Aorta (tissue), 5 donors: ENCODE measurements at regions of chr3 and their contacts with region 1.

Region 1: GRCh38 chr3:142993958-142994442 is 7.4 kb upstream of the U2SURP start:
- DNase-seq: peak; percentile 67 to 80
- ATAC-seq: peak; percentile 59
- H3K4me3 ChIP-seq: no peak overlapping the region
- H3K27ac ChIP-seq: no peak overlapping the region
- H3K4me1 ChIP-seq: no peaks in the 10 kb centered on the region
- H3K27me3 ChIP-seq: no peaks in the 10 kb centered on the region

Region 2: DNA sequence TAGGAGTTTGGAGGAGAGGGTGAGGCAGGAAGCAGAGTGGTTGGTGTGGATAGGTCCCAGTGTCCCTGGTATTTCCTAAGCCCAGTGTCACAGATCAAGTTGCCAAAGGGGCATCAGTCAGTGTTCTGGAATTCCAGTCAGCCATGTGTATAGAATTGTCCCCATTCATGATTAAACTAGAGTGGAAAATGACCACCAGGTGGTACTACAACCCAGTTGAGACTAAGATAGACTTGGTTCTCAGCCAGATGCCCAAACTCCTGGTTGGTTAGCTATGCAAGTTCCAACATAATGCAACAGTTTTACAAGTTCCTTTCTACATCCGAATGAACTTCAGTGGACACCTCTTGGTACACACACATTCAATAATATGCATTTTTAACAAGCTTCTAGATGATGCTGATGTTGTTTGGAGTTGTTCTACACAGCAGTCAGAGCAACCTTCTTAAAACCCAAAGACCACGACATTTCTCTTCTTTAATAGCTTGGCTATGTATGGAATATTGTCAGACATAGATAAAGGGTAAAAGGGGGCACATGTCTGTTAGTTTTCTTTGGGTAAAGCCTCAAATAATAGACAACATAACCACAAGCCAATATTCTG is 407.1 kb before region 1 on chr3:
- intact Hi-C with region 1: loop called (anchors 2 to 5 kb)
- DNase-seq: no peak
- ATAC-seq: peak; percentile 66
- H3K4me3 ChIP-seq: no peak overlapping the region
- H3K27ac ChIP-seq: no peak overlapping the region
- H3K4me1 ChIP-seq: no peaks in the 10 kb centered on the region
- H3K27me3 ChIP-seq: no peaks in the 10 kb centered on the region

Region 3: GRCh38 chr3:142595951-142596725 is 397.9 kb before region 1 on chr3 and contains the start of gene PLS1:
- intact Hi-C with region 1: loop called in 1 of 2 experiments (anchors 2 kb)
- DNase-seq: peak; percentile 86 to 93
- ATAC-seq: peak; percentile 94
- H3K4me3 ChIP-seq: peak within 1 kb of the TSS; percentile 15 to 56
- H3K27ac ChIP-seq: peak within 1 kb of the TSS in 1 of 2 donors; percentile 40
- H3K4me1 ChIP-seq: no peaks in the 10 kb centered on the region
- H3K27me3 ChIP-seq: no peaks in the 10 kb centered on the region
- total RNA-seq, gene PLS1: 0.97 to 1.0 TPM

Region 4: GRCh38 chr3:142723968-142724681 is 269.9 kb before region 1 on chr3 and contains the start of gene TRPC1:
- intact Hi-C with region 1: loop called in 1 of 2 experiments (anchors 10 kb)
- DNase-seq: peak; percentile 80 to 89
- ATAC-seq: peak; percentile 93
- H3K4me3 ChIP-seq: peak within 1 kb of the TSS; percentile 91 to 95
- H3K27ac ChIP-seq: peak within 1 kb of the TSS; percentile 20 to 98
- H3K4me1 ChIP-seq: no peaks in the 10 kb centered on the region
- H3K27me3 ChIP-seq: no peaks in the 10 kb centered on the region
- total RNA-seq, gene TRPC1: 25.5 to 29.2 TPM

Region 5: DNA sequence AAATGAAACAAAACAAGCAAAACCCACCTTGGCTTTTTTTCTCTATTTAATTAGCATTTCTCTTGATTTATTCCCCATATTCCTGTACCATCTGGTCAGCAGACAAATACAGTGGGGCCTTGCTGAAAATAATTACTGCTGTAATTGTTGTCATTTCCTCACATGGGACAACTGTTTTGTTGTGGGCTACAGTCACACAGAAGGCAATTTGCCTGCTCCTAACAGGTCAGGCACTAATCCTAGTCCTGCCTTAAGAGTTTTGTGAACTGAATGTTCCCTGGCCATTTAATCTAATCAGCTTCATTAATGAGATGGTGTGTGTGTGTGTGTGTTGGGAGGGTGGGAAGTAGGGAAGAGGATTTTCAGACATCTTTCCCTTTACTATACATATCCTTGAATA is 258.5 kb before region 1 on chr3:
- intact Hi-C with region 1: loop called in 1 of 2 experiments (anchors 10 kb)
- DNase-seq: no peak
- ATAC-seq: no peak
- H3K4me3 ChIP-seq: no peak overlapping the region
- H3K27ac ChIP-seq: no peak overlapping the region
- H3K4me1 ChIP-seq: no peaks in the 10 kb centered on the region
- H3K27me3 ChIP-seq: no peaks in the 10 kb centered on the region

Region 6: GRCh38 chr3:142828703-142829305 is 165.2 kb before region 1 on chr3:
- intact Hi-C with region 1: loop called in 1 of 2 experiments (anchors 2 kb)
- DNase-seq: peak; percentile 86 to 93
- ATAC-seq: peak; percentile 92
- H3K4me3 ChIP-seq: no peak overlapping the region
- H3K27ac ChIP-seq: no peak overlapping the region
- H3K4me1 ChIP-seq: no peaks in the 10 kb centered on the region
- H3K27me3 ChIP-seq: no peaks in the 10 kb centered on the region